ENCODE measurements at regions of chr3 and their contacts with region 1.

Region 1: DNA sequence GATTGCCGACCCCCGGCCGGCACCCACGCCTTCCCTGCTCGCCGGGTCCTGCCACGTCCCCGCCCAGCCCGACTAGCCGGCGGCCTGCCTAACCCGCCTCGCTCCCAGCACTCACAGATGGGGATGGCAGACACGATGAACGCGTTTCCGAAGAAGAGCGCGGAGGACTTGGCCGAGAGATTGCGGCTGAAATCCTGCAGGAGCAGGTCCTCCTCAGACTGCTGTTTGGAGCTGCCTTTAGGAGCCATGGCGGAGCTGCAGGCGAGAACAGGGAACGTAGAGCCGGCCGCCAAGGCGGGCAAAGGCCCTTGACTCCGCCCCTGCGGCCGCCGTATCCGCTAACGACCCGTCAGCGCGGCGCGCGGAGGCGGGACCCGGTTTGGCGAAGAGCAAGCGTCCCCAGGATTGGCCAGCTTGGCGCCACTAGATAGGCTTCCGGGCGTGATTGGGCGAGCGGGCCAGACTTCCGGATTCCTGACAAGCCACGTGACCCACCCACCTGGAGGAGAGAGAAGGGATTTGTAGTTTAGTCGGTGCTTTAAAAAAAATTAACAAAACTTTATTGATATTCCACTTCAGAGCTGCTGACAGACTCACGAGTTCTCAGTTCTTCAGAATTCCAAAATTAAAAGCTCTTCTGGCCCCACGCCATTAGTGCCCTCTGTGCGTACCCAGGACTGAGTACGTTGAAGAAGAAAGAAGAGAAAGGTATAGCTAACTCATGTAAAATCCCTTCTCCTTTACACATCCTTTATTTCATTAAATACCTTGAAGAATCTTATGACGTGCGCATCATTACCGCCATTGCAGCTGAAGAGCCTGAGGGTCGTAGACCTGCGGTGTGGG is at the start of gene SSR3:
- DNase-seq: peak; percentile 99 to 100
- H3K4me3 ChIP-seq: peak within 1 kb of the TSS; percentile 84 to 85
- H3K27ac ChIP-seq: peak within 1 kb of the TSS; percentile 76 to 85
- H3K4me1 ChIP-seq: peaks cover 0 to 38% (median 19%) of the 10 kb centered on the region in 4 donors
- H3K27me3 ChIP-seq: no peaks in the 10 kb centered on the region
- CTCF ChIP-seq: peak; percentile 46 to 78

Region 2: DNA sequence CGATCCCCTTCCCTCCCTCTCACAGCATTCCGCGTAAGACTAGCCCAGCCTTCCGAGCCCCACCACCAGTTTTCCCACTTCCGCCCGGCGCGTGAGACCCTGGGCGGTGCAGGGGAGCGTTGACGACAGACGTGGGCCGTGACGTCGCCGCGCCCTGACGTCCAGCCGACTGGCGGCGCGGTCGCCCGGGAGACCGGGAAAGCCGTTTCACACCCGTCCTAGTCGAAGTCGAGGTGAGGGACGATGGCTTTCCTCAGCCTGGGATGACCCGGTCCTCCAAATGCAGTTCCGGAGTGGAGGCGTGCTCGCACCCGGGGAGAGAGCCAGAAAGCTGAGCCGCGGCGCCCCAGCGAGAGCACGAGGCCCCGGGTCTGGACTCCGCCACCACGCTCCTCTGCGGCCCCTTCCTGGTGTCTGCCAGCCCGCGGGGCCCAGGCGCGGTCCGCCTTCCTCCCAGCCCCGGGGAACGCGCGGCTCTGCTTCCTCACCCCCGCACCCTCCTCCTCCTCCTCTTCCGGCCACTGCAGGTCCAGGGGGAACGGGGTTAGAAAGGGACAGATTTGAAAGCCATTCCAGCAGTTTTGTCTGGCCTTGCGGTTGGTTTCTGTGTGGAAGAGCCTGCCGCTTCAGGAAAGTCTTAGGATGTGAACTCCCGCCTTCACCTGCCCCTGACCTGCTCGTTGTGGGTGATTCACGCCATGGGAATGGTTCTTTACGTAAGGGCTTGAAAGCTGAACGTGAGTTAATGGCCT is 271.3 kb after region 1 on chr3 and contains the start of gene LEKR1:
- intact Hi-C with region 1: loop called (anchors 10 kb)
- DNase-seq: peak; percentile 76 to 91
- H3K4me3 ChIP-seq: peak within 1 kb of the TSS; percentile 67 to 74
- H3K27ac ChIP-seq: peak within 1 kb of the TSS; percentile 84 to 89
- H3K4me1 ChIP-seq: peaks cover 0 to 7% (median 3%) of the 10 kb centered on the region in 4 donors
- H3K27me3 ChIP-seq: no peaks in the 10 kb centered on the region
- CTCF ChIP-seq: no peak